Activated CD4-positive, alpha-beta memory T cell treated with anti-CD3 and anti-CD28 coated beads, Interleukin-2, amount 10 ng/mL, durations not matched to agents 7 days and 5 days (primary cell): ENCODE measurements at regions of chr15 and their contacts with region 1.

Region 1: GRCh38 chr15:92881802-92882696 is 18.1 kb upstream of the CHD2 start:
- DNase-seq: peak; percentile 99
- H3K4me3 Mint-ChIP-seq: peak overlapping the region; percentile 87
- H3K27ac Mint-ChIP-seq: peak overlapping the region; percentile 91
- H3K4me1 Mint-ChIP-seq: peaks cover 38% of the 10 kb centered on the region
- H3K27me3 Mint-ChIP-seq: no peaks in the 10 kb centered on the region

Region 2: GRCh38 chr15:92797168-92797951 is 84.7 kb before region 1 on chr15:
- CTCF ChIA-PET with region 1: interaction called, 12 read pairs
- POLR2A ChIA-PET with region 1: interaction called, 41 read pairs
- DNase-seq: no peak
- H3K4me3 Mint-ChIP-seq: no peak overlapping the region
- H3K27ac Mint-ChIP-seq: no peak overlapping the region
- H3K4me1 Mint-ChIP-seq: peaks cover 23% of the 10 kb centered on the region
- H3K27me3 Mint-ChIP-seq: no peaks in the 10 kb centered on the region

Region 3: DNA sequence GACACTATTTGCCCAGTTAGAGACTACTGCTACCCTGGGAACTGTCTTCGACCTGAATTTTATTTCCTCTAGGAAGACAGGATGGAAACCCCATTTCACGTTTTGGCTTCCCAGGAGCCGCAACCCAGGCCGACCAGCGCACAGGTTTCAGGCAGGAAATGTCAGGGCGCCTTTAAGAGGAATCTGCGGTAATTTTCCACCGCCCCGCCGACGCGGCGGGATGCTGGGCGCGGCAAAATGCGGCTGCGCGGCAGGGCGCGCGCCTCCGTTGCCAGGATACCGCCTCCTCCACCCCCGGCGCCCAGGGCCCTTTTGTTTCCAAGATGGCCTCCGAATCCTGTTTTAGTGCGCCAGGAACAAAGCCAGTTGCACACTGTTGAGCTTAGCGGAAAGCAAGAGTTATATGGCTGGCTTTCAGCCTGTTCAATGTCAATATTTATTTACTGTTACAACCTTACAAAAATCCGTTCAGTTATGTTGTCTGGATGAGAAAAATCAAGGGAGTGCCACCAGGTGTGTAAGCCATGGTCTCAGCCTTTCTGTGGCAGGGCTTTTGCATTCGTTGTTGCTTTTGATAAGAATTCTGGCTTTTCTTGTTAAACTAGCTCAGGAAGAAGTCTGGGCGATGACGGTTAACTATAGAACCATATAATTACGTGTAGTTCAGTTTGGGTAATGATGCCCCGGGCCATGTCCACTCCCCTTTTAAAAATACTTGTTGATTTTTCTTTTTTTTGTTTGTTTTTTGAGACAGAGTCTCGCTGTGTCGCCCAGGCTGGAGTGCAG is 61.6 kb before region 1 on chr15:
- CTCF ChIA-PET with region 1: interaction called, 12 read pairs
- POLR2A ChIA-PET with region 1: interaction called, 452 read pairs
- DNase-seq: peak; percentile 88
- H3K4me3 Mint-ChIP-seq: peak overlapping the region; percentile 78
- H3K27ac Mint-ChIP-seq: peak overlapping the region; percentile 93
- H3K4me1 Mint-ChIP-seq: peaks cover 66% of the 10 kb centered on the region
- H3K27me3 Mint-ChIP-seq: no peaks in the 10 kb centered on the region

Region 4: DNA sequence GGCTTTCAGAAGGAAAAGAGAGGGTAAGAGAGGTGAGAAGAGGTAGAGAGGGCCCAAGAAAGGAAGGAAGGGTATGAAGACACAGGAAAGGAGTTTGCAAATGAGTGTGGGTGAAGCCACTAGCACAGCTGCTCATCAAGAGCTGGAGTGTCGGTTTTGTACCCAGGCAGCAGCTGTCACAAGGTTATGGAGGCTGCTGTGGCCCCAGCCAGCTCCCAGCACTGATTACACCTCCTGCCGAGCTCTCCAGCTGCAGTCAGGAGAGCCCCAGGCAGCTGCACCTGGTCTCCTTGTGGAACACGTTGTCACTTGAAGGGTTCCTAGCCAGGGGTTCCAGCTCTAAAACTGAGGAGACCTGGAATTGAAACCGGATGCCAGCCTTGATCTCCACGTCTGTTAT is 42.4 kb before region 1 on chr15:
- CTCF ChIA-PET with region 1: interaction called, 4 read pairs
- POLR2A ChIA-PET with region 1: interaction called, 453 read pairs
- DNase-seq: no peak
- H3K4me3 Mint-ChIP-seq: no peak overlapping the region
- H3K27ac Mint-ChIP-seq: peak overlapping the region; percentile 71
- H3K4me1 Mint-ChIP-seq: peaks cover 44% of the 10 kb centered on the region
- H3K27me3 Mint-ChIP-seq: no peaks in the 10 kb centered on the region

Region 5: DNA sequence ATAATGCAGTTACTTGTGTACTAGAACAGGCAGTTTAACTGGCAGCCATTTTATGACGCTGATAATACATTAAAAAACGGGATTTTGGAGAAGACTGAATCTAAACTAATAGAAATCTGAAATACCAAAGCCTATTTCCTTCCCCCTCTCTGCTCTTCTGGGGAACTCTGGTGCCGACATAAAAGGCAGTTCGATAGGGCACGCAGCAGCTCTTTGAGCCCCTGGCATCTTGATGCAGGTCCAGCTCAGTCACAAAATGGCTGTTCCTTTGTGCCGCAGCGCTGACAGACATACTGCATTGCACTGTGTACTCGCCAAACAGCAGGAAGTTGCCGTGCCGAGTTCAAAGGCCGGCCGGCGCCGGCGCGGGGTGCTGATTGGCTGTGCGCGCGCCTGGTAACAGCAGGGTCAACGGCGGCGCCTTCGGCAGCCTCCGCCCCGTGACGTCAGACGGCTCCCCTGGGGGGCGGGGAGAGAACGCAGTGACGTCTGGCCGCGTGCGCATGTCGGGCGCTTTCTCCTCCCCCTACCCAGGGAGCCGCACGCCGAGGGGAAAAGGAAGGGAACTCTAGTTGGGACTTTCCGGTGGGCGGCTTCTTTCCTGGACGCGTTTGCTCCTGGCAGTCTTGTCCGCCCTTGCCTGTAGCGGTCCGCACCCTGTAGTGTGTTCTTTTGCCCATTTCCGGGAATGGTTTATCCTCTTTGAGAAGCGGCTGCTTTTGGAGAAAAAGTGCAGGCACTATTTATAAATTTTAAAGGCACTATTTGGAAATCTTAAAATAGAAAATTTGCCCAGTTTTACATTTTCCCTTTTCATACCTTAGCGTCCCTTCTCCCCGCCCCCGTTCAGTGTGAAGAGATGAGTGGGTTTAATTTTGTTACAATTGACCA is 22.1 kb after region 1 on chr15:
- CTCF ChIA-PET with region 1: interaction called, 32 read pairs
- POLR2A ChIA-PET with region 1: interaction called, 1,323 read pairs
- DNase-seq: peak; percentile 100
- H3K4me3 Mint-ChIP-seq: peak overlapping the region; percentile 92
- H3K27ac Mint-ChIP-seq: peak overlapping the region; percentile 100
- H3K4me1 Mint-ChIP-seq: peaks cover 55% of the 10 kb centered on the region
- H3K27me3 Mint-ChIP-seq: no peaks in the 10 kb centered on the region